WTC11 (cell line): ENCODE measurements at regions of chr1 and their contacts with region 1.

Region 1: DNA sequence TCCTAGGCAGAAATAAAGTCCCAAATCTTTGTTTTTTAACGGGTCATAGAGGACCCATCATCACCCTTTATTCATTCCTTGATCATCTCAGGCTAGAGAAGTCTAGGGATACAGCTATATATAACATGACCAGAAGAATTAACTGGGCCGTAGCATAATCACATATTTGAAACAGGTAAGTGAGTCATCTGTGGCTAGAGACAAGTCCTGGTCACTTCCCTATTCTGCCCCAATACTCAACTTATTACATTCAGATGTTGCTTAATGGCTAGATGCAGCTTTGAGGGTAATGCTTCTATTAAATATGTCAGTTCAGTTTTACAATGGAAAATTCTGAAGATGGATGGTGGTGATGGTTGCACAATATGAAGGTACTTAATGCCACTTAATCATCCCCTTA is 47.0 kb downstream of the EXO1 start:
- DNase-seq: no peak
- ATAC-seq: no peak
- H3K4me3 Mint-ChIP-seq: no peak overlapping the region
- H3K27ac Mint-ChIP-seq: no peak overlapping the region
- H3K4me1 Mint-ChIP-seq: no peaks in the 10 kb centered on the region
- H3K27me3 Mint-ChIP-seq: no peaks in the 10 kb centered on the region
- CTCF ChIP-seq: no peak

Region 2: GRCh38 chr1:241985787-241986186 is 90.8 kb after region 1 on chr1:
- CTCF ChIA-PET with region 1: interaction called, 22 read pairs
- POLR2A ChIA-PET with region 1: no interaction called
- DNase-seq: peak; percentile 66
- ATAC-seq: peak; percentile 85
- H3K4me3 Mint-ChIP-seq: no peak overlapping the region
- H3K27ac Mint-ChIP-seq: no peak overlapping the region
- H3K4me1 Mint-ChIP-seq: no peaks in the 10 kb centered on the region
- H3K27me3 Mint-ChIP-seq: no peaks in the 10 kb centered on the region
- CTCF ChIP-seq: no peak; the same call in 1 of the 2 replicates